ENCODE measurements at regions of chr2 and their contacts with region 1.

Region 1: GRCh38 chr2:12032398-12032797 is 286.0 kb downstream of the LPIN1 start:
- DNase-seq: peak; percentile 86
- ATAC-seq: peak; percentile 77
- H3K4me3 ChIP-seq: peak overlapping the region in 2 of 5 experiments; percentile 7 to 39
- H3K4me3 Mint-ChIP-seq: peak overlapping the region; percentile 83
- H3K27ac ChIP-seq: peak overlapping the region; percentile 66 to 81
- H3K27ac Mint-ChIP-seq: peak overlapping the region; percentile 92
- H3K4me1 ChIP-seq: peaks cover 61 to 64% of the 10 kb centered on the region in 2 donors
- H3K4me1 Mint-ChIP-seq: peaks cover 66% of the 10 kb centered on the region
- H3K27me3 ChIP-seq: no peaks in the 10 kb centered on the region
- H3K27me3 Mint-ChIP-seq: no peaks in the 10 kb centered on the region
- CTCF ChIP-seq: peak; percentile 39

Region 2: DNA sequence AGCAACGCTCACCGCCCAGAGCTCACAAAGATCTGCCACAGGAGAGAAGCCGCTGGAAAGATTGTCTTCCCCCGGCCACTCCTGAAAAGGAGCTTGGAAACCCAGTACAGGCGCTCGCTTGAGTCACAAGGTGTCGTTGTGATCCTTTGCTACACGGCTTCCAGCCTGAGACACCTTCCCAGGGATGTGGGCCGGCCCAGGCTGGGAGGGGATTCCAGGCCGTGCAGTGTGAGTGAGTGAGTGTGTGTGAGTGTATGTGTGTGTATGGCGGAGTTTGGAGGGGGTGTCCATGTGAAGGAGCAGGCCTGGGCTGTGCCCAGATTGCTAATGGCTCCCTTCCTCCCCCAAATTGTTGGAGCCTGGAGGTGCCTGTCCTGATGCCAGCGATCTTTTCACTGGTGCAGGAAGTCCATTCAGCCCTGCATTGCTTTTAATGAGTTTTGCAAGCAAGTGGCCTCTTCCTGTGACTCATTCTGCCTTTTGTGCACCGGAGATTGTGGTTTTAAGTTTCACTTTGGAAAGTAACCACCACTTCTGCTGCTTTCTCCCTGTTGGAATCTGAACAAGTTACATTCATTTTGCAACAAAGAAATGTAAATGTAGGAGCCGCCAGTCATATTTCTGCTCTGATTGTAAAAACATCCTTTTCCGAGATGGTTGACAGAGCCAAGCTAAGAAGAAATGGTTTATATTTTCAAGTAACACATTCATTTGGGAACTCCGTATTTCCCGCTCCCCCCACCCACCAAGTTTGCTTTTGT is 202.3 kb before region 1 on chr2:
- CTCF ChIA-PET with region 1: interaction called, 11 read pairs
- POLR2A ChIA-PET with region 1: interaction called, 6 read pairs
- intact Hi-C with region 1: loop called (anchors 1 kb)
- DNase-seq: peak; percentile 58
- ATAC-seq: peak; percentile 59
- H3K4me3 ChIP-seq: peak overlapping the region in 4 of 5 experiments; percentile 3 to 34 (median 20)
- H3K4me3 Mint-ChIP-seq: peak overlapping the region; percentile 83
- H3K27ac ChIP-seq: peak overlapping the region; percentile 40 to 64
- H3K27ac Mint-ChIP-seq: peak overlapping the region; percentile 78
- H3K4me1 ChIP-seq: peaks cover 42 to 63% of the 10 kb centered on the region in 2 donors
- H3K4me1 Mint-ChIP-seq: peaks cover 61% of the 10 kb centered on the region
- H3K27me3 ChIP-seq: no peaks in the 10 kb centered on the region
- H3K27me3 Mint-ChIP-seq: no peaks in the 10 kb centered on the region
- CTCF ChIP-seq: no peak

Region 3: DNA sequence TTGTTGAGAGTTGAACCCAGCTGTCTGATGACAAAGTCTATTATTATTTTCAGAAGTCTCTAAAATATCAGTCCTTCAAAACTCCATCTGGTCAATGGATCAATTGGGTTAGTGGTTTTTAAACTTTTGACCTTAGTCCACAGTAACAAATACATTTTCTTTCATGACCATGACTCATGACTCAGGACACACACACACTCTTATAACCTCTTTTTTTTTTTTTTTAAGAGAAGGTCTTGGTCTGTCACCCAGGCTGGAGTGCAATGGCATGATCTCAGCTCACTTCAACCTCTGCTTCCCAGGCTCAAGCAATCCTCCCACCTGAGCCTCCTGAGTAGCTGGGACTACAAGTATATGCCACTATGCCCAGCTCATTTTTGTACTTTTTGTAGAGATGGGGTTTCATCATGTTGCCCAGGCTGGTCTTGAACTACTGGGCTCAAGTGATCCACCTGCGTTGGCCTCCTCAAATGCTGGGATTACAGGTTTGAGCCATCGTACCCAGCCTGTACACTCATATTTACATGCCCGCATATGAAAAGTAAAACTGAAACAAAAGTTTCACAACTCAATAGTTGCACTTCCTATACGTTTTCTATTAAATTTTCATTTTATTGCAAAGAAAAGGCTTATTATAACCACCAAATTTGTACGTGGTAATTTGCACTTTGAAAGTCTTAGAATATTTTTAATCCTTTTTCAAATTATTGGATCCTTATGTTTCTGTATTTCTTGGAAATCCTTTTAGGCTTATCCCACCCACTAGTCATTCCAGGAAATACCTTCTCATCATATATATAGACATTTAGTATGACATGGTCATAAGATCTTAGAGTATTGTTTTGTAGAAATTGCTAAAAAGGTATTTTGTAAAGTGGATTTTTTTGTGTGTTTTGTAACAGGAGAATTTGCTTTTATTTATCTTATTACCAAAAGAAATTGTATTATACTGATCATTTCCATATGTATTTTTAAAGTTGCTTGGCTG is 87.0 kb before region 1 on chr2:
- CTCF ChIA-PET with region 1: no interaction called
- POLR2A ChIA-PET with region 1: no interaction called
- intact Hi-C with region 1: loop called (anchors 2 kb)
- DNase-seq: peak; percentile 54
- ATAC-seq: peak; percentile 67
- H3K4me3 ChIP-seq: peak overlapping the region in 4 of 5 experiments; percentile 1 to 46 (median 16)
- H3K4me3 Mint-ChIP-seq: peak overlapping the region; percentile 84
- H3K27ac ChIP-seq: peak overlapping the region; percentile 53 to 75
- H3K27ac Mint-ChIP-seq: peak overlapping the region; percentile 95
- H3K4me1 ChIP-seq: peaks cover 21 to 26% of the 10 kb centered on the region in 2 donors
- H3K4me1 Mint-ChIP-seq: peaks cover 31% of the 10 kb centered on the region
- H3K27me3 ChIP-seq: no peaks in the 10 kb centered on the region
- H3K27me3 Mint-ChIP-seq: no peaks in the 10 kb centered on the region
- CTCF ChIP-seq: no peak

Region 4: DNA sequence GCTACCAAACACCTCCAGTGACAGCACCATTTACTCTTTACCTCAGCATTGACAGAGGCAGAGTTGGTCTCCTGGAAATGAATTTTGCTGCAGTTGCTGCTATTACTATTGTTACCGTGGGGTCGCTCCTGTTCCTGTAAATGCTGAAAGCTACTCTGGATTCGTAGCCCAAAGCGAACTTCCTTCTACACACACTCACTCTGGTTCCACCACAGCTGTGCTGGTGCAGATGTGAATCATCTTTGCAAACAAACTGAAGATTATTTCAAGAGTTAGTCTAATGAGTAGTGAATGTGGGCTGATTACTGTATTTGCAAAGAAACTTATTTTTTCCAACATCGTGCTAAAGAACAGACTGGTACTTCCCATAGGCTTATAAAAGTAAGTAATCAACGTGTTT is 18.0 kb after region 1 on chr2:
- CTCF ChIA-PET with region 1: interaction called, 26 read pairs
- POLR2A ChIA-PET with region 1: interaction called, 25 read pairs
- intact Hi-C with region 1: loop called (anchors 2 kb)
- DNase-seq: peak; percentile 65
- ATAC-seq: peak; percentile 69
- H3K4me3 ChIP-seq: peak overlapping the region in 1 of 5 experiments; percentile 7
- H3K4me3 Mint-ChIP-seq: peak overlapping the region; percentile 64
- H3K27ac ChIP-seq: no peak overlapping the region
- H3K27ac Mint-ChIP-seq: peak overlapping the region; percentile 67
- H3K4me1 ChIP-seq: peaks cover 61 to 68% of the 10 kb centered on the region in 2 donors
- H3K4me1 Mint-ChIP-seq: peaks cover 73% of the 10 kb centered on the region
- H3K27me3 ChIP-seq: no peaks in the 10 kb centered on the region
- H3K27me3 Mint-ChIP-seq: no peaks in the 10 kb centered on the region
- CTCF ChIP-seq: no peak

Region 5: GRCh38 chr2:12087671-12088381 is 55.4 kb after region 1 on chr2:
- CTCF ChIA-PET with region 1: no interaction called
- POLR2A ChIA-PET with region 1: no interaction called
- intact Hi-C with region 1: no loop called
- DNase-seq: no peak
- ATAC-seq: no peak
- H3K4me3 ChIP-seq: no peak overlapping the region
- H3K4me3 Mint-ChIP-seq: no peak overlapping the region
- H3K27ac ChIP-seq: no peak overlapping the region
- H3K27ac Mint-ChIP-seq: no peak overlapping the region
- H3K4me1 ChIP-seq: peaks cover 9 to 10% of the 10 kb centered on the region in 2 donors
- H3K4me1 Mint-ChIP-seq: peaks cover 18% of the 10 kb centered on the region
- H3K27me3 ChIP-seq: no peaks in the 10 kb centered on the region
- H3K27me3 Mint-ChIP-seq: no peaks in the 10 kb centered on the region
- CTCF ChIP-seq: no peak

Measured in B cell (primary cell).